Right ventricle myocardium inferior (tissue), 1 donor: ENCODE measurements at regions of chr2 and their contacts with region 1.

Region 1: DNA sequence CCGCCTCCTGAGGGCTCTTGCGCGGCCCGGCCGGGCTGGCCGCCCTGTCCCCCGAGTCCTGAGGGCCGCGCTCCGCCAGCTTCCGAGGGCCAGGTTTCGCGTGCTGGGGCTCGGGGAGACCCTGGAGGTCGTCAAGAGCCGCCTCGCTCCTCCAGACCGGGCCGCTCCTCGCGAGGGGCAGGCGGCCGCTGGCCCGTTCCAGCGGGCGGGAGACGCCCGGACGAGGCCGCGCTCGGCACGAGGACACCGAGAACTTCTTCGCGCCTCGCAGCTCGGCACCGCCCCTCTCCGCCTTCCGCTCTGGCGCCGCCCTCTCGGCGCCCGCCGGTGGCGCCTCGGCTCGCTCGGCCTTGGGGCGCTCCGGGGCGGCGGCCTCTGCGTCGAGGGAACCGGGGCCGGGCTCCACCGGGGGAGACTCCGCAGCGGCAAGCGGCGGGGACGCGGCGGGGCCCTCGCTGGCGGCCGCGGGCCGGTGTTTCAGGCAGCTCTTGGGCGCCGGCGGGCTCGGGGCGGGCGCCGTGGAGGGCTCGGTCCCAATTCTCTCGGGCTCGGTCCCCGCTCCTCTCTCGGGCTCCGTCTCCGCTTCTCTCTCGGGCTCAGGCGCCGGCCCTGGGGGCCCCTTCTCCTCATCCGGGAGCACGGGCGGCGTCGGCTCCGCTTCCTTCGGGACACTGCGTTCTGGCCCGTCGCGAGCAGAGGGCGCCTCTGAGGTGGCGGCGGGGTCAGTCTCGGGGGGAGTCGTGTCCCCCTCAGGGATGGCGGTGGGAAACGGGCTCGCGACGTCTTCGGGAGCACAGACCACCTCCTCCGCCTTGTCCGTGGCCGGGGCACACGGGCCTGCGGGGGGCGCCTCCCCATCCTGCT is 91.6 kb upstream of the MGAT4A start:
- DNase-seq: peak; percentile 88
- ATAC-seq: peak; percentile 77

Region 2: DNA sequence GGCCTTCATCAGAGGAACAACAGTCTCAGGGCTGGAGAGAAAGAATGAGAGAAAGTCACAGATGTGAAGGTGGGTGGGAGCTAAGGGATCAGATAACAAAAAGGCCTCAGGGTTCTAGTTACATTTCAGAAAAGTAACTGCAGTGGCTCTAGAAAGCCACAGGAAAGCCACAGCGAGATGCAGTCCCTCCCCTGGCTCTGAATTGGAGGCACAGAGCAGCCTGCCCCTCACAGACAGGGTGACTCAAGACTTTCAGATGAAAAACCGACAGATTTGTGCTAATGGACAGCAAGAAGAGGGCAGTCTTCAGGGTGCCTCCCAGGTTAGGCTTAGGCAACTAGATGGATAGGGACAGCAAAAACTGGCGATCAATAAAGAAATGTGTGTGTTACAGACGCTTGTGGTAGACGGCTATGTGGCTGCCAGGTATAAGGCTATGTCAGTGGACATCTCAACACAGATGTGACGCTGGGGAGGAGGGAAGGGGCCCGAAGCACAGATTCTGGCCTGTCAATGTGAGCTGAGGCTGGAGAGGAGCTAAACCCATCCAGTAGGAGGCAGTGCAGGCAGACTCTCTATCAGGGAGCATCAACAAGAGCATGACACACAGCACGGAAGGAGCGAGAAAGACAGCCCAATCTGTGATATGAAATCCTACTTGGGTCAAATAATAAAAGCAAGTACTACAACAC is 188.0 kb before region 1 on chr2:
- intact Hi-C with region 1: no loop called
- DNase-seq: no peak
- ATAC-seq: no peak

Region 3: GRCh38 chr2:98731041-98731893 is 91.3 kb before region 1 on chr2 and contains the start of gene MGAT4A:
- intact Hi-C with region 1: loop called (anchors 5 kb)
- DNase-seq: peak; percentile 92
- ATAC-seq: peak; percentile 96
- total RNA-seq, gene MGAT4A: 19.3 TPM

Region 4: GRCh38 chr2:98757904-98758421 is 64.6 kb before region 1 on chr2:
- intact Hi-C with region 1: loop called (anchors 2 kb)
- DNase-seq: peak; percentile 74
- ATAC-seq: peak; percentile 89

Region 5: GRCh38 chr2:98771721-98772524 is 50.6 kb before region 1 on chr2:
- intact Hi-C with region 1: loop called (anchors 5 kb)
- DNase-seq: no peak
- ATAC-seq: peak; percentile 26